ENCODE measurements at regions of chr6 and their contacts with region 1.

Region 1: GRCh38 chr6:37373822-37374471 is 20.2 kb downstream of the RNF8 start:
- DNase-seq: peak; percentile 40
- H3K4me3 ChIP-seq: no peak overlapping the region
- H3K27ac ChIP-seq: no peak overlapping the region
- H3K4me1 ChIP-seq: peaks cover 12% of the 10 kb centered on the region
- H3K27me3 ChIP-seq: no peaks in the 10 kb centered on the region
- CTCF ChIP-seq: no peak
- POLR2A ChIP-seq: no peak

Region 2: GRCh38 chr6:37399131-37399530 is 25.2 kb after region 1 on chr6:
- CTCF ChIA-PET with region 1: no interaction called
- POLR2A ChIA-PET with region 1: no interaction called
- dilution Hi-C with region 1: no loop called
- intact Hi-C with region 1: loop called (anchors 2 kb)
- DNase-seq: no peak
- H3K4me3 ChIP-seq: no peak overlapping the region
- H3K27ac ChIP-seq: no peak overlapping the region
- H3K4me1 ChIP-seq: no peaks in the 10 kb centered on the region
- H3K27me3 ChIP-seq: no peaks in the 10 kb centered on the region
- CTCF ChIP-seq: no peak
- POLR2A ChIP-seq: no peak